Activated T-helper 1 cell treated with anti-CD3 and anti-CD28 coated beads, Interleukin-12 subunit alpha, Interleukin-12 subunit beta, Interleukin-2, Interleukin-4 antibody, amounts not matched to agents 30 ng/mL and 10 ng/mL and 1 ng/mL, durations not matched to agents 14 hours and 24 hours and 36 hours (primary cell): ENCODE measurements at regions of chr11 and their contacts with region 1.

Region 1: GRCh38 chr11:6682936-6683861 is at the start of gene MRPL17:
- DNase-seq: peak; percentile 100
- H3K4me3 Mint-ChIP-seq: peak within 1 kb of the TSS; percentile 99
- H3K27ac Mint-ChIP-seq: peak within 1 kb of the TSS; percentile 99
- H3K4me1 Mint-ChIP-seq: peaks cover 42% of the 10 kb centered on the region
- H3K27me3 Mint-ChIP-seq: no peaks in the 10 kb centered on the region
- total RNA-seq, gene MRPL17: 121 and 132 TPM in 2 replicates

Region 2: GRCh38 chr11:6377902-6378639 is 305.1 kb before region 1 on chr11:
- intact Hi-C with region 1: loop called (anchors 5 kb)
- DNase-seq: no peak
- H3K4me3 Mint-ChIP-seq: peak overlapping the region; percentile 19
- H3K27ac Mint-ChIP-seq: peak overlapping the region; percentile 44
- H3K4me1 Mint-ChIP-seq: peaks cover 33% of the 10 kb centered on the region
- H3K27me3 Mint-ChIP-seq: peaks cover 4% of the 10 kb centered on the region

Region 3: DNA sequence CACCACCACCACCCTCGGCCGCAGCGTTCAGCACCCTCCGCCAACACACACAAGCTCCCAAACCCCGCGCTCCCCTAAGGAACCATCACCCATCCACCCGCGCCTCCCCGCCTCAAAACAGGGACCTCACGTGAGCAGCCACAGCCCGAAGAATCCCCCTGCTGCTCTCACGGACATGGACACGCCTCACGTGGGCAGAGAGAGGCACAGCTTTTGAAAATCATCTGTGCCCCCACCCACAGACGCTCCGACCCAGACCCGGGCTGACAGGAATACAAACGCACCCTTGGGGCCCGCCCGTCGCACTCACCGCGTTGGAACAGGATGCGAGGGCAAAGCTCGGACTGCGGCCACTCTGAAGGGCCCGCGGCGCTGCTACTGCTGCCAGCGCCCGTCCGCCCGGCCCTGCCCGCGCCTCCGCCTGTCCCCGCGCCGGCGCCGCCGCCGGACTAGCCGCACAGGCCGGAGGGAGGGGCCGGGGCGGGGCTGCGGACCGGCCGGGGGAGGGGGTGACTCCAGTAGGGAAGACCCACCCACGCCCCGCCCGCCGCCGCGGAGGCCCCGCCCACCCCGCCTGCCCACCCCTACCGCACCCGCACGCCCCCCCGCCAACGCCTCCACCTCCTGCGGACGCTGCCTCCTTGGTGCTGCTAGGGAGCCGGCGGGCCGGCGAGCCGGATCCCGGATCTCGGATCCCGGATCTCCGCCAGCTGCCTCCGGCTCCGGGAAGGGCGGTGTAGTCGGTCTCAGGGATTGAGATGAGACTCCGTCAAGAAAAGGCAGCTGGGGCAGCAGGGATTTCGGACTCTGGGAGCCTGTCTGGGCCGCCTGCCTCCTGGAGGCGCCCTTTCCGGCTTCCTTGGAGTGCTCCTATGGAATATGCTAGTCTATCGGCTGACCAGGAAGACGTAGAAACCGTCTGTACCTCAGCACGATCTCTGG is 209.4 kb before region 1 on chr11 and contains the start of gene TRIM3:
- intact Hi-C with region 1: loop called (anchors 2 kb)
- DNase-seq: peak; percentile 52
- H3K4me3 Mint-ChIP-seq: peak within 1 kb of the TSS; percentile 78
- H3K27ac Mint-ChIP-seq: peak within 1 kb of the TSS; percentile 36
- H3K4me1 Mint-ChIP-seq: peaks cover 9% of the 10 kb centered on the region
- H3K27me3 Mint-ChIP-seq: peaks cover 7% of the 10 kb centered on the region
- total RNA-seq, gene TRIM3: 2.4 and 3.1 TPM in 2 replicates

Region 4: GRCh38 chr11:6531267-6531752 is 151.9 kb before region 1 on chr11:
- intact Hi-C with region 1: loop called (anchors 1 kb)
- DNase-seq: peak; percentile 16
- H3K4me3 Mint-ChIP-seq: no peak overlapping the region
- H3K27ac Mint-ChIP-seq: no peak overlapping the region
- H3K4me1 Mint-ChIP-seq: peaks cover 12% of the 10 kb centered on the region
- H3K27me3 Mint-ChIP-seq: no peaks in the 10 kb centered on the region

Region 5: DNA sequence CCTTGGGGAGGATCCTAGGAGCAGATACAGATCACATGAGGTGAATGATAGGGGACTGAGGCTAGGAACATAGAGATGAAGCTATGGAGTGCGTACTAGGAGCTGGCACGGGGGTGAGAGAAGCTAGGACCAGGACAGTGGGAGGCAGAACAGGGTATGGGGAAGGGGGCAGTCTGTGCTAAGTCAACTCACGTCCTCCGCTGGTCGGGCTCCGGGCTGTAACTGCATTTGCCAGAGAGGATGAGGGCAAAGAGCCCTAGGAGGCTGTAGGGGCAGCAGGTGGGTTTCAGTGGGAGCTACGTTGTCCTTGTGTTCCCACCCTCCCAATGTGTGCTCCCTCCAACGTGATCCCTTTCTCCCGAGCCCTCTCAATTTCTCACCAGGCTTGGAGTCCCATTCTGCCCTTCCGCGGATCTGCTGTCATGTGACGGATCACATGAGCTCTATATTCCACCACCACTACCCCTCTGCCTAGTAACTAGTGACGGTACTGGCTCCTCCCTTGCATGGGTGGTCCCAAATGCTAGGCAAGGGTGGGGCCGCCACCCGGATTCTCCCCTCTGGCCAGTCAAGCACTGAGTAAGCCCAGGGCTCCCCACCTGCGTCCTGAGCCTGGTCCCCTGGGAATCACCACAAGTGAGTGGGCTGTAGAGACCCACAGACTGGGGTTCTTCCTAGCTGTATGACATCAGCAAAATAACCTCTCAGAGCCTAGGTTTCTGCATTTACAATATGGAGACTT is 64.0 kb before region 1 on chr11 and contains the start of gene TPP1:
- intact Hi-C with region 1: loop called (anchors 1 kb)
- DNase-seq: peak; percentile 89
- H3K4me3 Mint-ChIP-seq: no peak within 1 kb of the TSS
- H3K27ac Mint-ChIP-seq: no peak within 1 kb of the TSS
- H3K4me1 Mint-ChIP-seq: no peaks in the 10 kb centered on the region
- H3K27me3 Mint-ChIP-seq: no peaks in the 10 kb centered on the region
- total RNA-seq, gene TPP1: 38.4 and 40.3 TPM in 2 replicates

Region 6: DNA sequence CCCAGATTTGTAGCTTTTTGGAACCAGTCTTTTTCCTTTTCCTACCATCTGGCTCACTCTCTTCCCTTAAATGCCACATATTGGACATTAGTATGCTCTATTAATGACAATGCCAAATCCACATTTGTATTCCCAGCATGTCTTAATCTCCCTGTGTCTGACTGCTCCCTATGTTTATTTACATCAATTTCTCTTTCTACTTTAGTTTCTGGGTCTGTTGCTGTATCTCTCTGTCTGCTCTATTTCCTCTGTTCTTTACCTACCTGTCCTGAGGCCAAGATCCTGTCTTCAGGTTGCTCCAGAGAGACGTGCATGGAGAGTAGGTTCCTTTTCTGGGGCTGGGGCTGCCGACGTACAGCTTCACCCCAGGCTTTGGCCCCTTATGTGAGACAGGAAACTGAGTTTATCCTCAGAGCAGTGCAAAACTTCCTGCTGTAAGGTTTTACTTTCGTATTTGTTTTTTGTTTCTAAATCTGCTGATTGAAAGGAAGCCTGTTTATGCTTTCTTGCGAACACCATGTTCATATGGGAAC is 63.0 kb after region 1 on chr11:
- intact Hi-C with region 1: loop called (anchors 1 kb)
- DNase-seq: peak; percentile 40
- H3K4me3 Mint-ChIP-seq: no peak overlapping the region
- H3K27ac Mint-ChIP-seq: no peak overlapping the region
- H3K4me1 Mint-ChIP-seq: no peaks in the 10 kb centered on the region
- H3K27me3 Mint-ChIP-seq: no peaks in the 10 kb centered on the region